ENCODE measurements at regions of chr17 and their contacts with region 1.

Region 1: DNA sequence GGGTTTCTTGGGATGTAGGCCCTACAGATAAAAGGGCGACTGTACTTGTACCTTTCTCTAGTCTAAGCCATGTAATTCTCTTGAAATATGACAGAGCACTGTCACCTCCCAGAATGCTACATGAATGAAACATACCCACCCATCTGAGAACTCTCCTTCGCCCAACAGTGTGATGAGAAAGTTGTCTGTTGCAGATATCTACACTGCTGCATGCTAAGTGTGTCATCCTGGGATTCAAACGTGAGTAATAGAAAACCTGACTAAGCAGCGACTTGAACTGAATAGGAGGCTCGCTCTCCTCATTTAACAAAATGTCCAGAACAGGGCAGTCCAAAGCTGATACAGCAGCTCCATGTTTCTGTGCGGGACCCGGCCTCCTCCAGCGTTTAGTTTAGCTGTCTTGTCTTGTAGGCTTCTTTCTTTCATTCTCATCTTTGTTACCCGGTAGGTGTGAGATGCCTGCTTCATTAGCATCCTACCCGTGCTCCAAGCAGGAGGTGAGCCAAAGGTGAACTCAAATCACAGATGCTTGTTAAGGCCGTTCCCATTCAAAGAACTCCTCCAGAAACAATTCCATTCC is 211.9 kb downstream of the PRKCA start:
- DNase-seq: peak; percentile 41
- ATAC-seq: peak; percentile 64
- H3K4me3 Mint-ChIP-seq: no peak overlapping the region
- H3K27ac Mint-ChIP-seq: peak overlapping the region; percentile 49
- H3K4me1 Mint-ChIP-seq: peaks cover 87% of the 10 kb centered on the region
- H3K27me3 Mint-ChIP-seq: no peaks in the 10 kb centered on the region
- CTCF ChIP-seq: no peak

Region 2: GRCh38 chr17:66405836-66406677 is 108.3 kb before region 1 on chr17:
- CTCF ChIA-PET with region 1: interaction called, 3 read pairs
- POLR2A ChIA-PET with region 1: no interaction called
- intact Hi-C with region 1: loop called (anchors 10 kb)
- DNase-seq: no peak
- ATAC-seq: no peak
- H3K4me3 Mint-ChIP-seq: no peak overlapping the region
- H3K27ac Mint-ChIP-seq: peak overlapping the region; percentile 85
- H3K4me1 Mint-ChIP-seq: peaks cover 83% of the 10 kb centered on the region
- H3K27me3 Mint-ChIP-seq: no peaks in the 10 kb centered on the region
- CTCF ChIP-seq: no peak

Region 3: DNA sequence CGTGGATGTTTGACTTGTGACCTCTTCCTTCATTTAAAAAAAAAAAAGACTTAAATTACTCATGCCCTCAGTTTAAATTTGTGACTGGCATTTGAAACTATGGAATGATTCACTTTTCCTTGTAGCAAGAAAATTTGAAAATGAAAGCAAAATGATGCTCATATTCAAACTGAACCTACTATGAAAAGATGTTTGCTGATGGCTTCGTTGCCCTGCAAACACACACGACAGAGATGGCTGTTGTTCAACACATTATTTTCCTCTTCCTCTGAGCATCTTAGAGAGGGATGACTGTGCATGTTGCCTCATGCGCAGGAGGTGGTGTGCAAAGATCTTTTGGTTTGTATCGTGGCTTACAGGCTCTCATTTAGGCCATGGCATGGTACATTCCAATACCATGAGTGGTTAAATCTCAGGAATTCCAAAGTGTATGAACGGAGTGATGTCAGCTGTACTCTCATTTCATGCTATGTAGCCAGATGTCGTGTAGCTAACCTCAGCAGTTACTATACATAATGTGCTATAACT is 47.4 kb before region 1 on chr17:
- CTCF ChIA-PET with region 1: no interaction called
- POLR2A ChIA-PET with region 1: interaction called, 5 read pairs
- intact Hi-C with region 1: loop called (anchors 5 kb)
- DNase-seq: peak; percentile 80
- ATAC-seq: peak; percentile 89
- H3K4me3 Mint-ChIP-seq: peak overlapping the region; percentile 44
- H3K27ac Mint-ChIP-seq: peak overlapping the region; percentile 91
- H3K4me1 Mint-ChIP-seq: peaks cover 69% of the 10 kb centered on the region
- H3K27me3 Mint-ChIP-seq: no peaks in the 10 kb centered on the region
- CTCF ChIP-seq: no peak

Region 4: GRCh38 chr17:66481271-66481670 is 33.0 kb before region 1 on chr17:
- CTCF ChIA-PET with region 1: no interaction called
- POLR2A ChIA-PET with region 1: no interaction called
- intact Hi-C with region 1: no loop called
- DNase-seq: no peak
- ATAC-seq: no peak
- H3K4me3 Mint-ChIP-seq: no peak overlapping the region
- H3K27ac Mint-ChIP-seq: no peak overlapping the region
- H3K4me1 Mint-ChIP-seq: peaks cover 35% of the 10 kb centered on the region
- H3K27me3 Mint-ChIP-seq: no peaks in the 10 kb centered on the region
- CTCF ChIP-seq: no peak